A673 (cell line): ENCODE measurements at regions of chr6 and their contacts with region 1.

Region 1: DNA sequence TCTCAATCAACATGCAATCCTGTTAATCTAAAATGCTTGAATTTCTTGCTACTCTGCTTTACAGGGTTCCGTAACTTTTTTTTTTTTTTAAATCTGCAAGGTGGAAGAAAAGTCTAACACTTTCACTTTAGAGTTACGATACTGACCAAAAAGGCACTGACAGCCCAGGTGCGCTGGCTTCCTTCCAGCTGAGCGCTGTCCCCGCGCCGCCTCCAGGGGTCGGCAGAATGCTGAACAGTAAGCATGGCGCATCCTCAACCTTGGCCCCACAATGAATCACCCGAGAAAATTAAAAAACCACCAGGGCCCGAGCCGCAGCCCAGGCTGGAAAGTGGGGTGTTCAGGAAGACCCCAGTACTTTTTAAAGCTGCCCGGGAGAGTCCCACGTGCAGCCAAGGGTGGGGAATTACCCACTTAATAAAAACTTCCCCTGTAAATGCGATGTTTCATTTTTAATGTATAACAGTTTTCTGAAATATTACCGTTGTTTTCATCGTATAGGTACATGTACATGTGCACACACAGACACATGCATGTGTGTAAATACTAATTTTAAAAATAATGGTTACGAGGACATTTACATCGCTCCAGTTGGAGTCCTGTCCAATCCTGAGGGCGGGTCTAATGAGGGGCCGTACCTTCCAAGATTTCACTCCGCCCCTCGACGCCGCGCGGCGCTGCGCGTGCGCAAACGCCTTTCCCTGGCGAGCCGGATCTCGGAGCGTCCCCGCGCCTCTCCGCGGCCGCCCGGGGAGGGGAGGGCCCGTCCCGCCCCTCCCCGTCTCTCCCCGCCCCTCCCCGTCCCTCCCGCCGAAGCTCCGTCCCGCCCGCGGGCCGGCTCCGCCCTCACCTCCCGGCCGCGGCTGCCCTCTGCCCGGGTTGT is at the start of gene GINM1:
- DNase-seq: peak; percentile 96
- H3K4me3 ChIP-seq: peak within 1 kb of the TSS; percentile 100
- H3K27ac ChIP-seq: peak within 1 kb of the TSS; percentile 87
- H3K4me1 ChIP-seq: no peaks in the 10 kb centered on the region
- H3K27me3 ChIP-seq: no peaks in the 10 kb centered on the region
- CTCF ChIP-seq: peak; percentile 77
- total RNA-seq, gene GINM1: 24.0 and 29.7 TPM in 2 replicates

Region 2: GRCh38 chr6:148720406-148720805 is 845.4 kb before region 1 on chr6:
- CTCF ChIA-PET with region 1: no interaction called
- POLR2A ChIA-PET with region 1: no interaction called
- intact Hi-C with region 1: no loop called
- DNase-seq: no peak
- H3K4me3 ChIP-seq: no peak overlapping the region
- H3K27ac ChIP-seq: no peak overlapping the region
- H3K4me1 ChIP-seq: no peaks in the 10 kb centered on the region
- H3K27me3 ChIP-seq: no peaks in the 10 kb centered on the region
- CTCF ChIP-seq: no peak

Region 3: GRCh38 chr6:149443411-149444181 is 122.2 kb before region 1 on chr6:
- CTCF ChIA-PET with region 1: no interaction called
- POLR2A ChIA-PET with region 1: no interaction called
- intact Hi-C with region 1: no loop called
- DNase-seq: no peak
- H3K4me3 ChIP-seq: no peak overlapping the region
- H3K27ac ChIP-seq: no peak overlapping the region
- H3K4me1 ChIP-seq: no peaks in the 10 kb centered on the region
- H3K27me3 ChIP-seq: no peaks in the 10 kb centered on the region
- CTCF ChIP-seq: no peak

Region 4: GRCh38 chr6:149863697-149864577 is 298.2 kb after region 1 on chr6 and contains the start of gene LRP11:
- CTCF ChIA-PET with region 1: no interaction called
- POLR2A ChIA-PET with region 1: no interaction called
- intact Hi-C with region 1: loop called (anchors 10 kb)
- DNase-seq: peak; percentile 88
- H3K4me3 ChIP-seq: peak within 1 kb of the TSS; percentile 92
- H3K27ac ChIP-seq: peak within 1 kb of the TSS; percentile 82
- H3K4me1 ChIP-seq: peaks cover 19% of the 10 kb centered on the region
- H3K27me3 ChIP-seq: no peaks in the 10 kb centered on the region
- CTCF ChIP-seq: no peak
- total RNA-seq, gene LRP11: 53.2 and 56.1 TPM in 2 replicates